GM23248 (cell line): ENCODE measurements at regions of chr12 and their contacts with region 1.

Region 1: GRCh38 chr12:105053116-105053572 is 31.1 kb downstream of the ALDH1L2 start:
- DNase-seq: peak; percentile 76
- H3K4me3 ChIP-seq: no peak overlapping the region
- H3K27ac ChIP-seq: no peak overlapping the region
- H3K4me1 ChIP-seq: no peaks in the 10 kb centered on the region
- H3K27me3 ChIP-seq: no peaks in the 10 kb centered on the region

Region 2: DNA sequence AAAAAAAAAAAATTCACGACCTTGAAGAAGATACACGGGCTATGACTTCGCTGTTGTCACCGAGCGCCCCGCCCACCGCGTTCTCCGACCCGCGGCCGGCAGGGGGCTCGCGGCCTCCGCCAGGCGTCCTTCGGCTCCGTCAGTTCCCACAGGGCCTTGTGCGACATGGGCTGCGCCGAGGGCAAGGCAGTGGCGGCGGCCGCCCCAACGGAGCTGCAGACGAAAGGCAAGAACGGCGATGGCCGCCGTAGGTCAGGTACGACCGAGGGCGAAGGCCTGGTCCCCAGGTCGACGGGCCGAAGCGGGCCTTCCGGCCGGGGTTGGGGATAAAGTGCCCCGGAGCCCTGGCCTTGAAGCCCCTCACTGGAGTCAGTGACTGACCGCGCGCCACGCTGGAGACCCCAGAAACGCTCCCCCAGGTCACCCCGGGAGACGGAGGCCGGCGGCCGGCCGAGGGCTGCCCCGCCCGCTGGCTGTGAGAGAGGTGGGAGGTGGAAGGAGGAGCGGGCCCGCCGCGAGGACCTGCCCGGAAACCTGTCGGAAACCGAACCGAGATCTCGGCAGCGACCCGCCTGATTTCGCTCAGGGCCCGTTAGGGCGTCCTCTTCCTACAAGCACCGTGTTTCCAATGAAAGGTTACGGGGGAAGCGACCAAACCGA is 837.4 kb before region 1 on chr12 and contains the start of gene TXNRD1:
- in situ Hi-C with region 1: loop called (anchors 25 kb)
- DNase-seq: peak; percentile 92
- H3K4me3 ChIP-seq: peak within 1 kb of the TSS; percentile 53
- H3K27ac ChIP-seq: no peak within 1 kb of the TSS
- H3K4me1 ChIP-seq: peaks cover 31% of the 10 kb centered on the region
- H3K27me3 ChIP-seq: no peaks in the 10 kb centered on the region
- total RNA-seq, gene TXNRD1: 464 and 477 TPM in 2 replicates

Region 3: GRCh38 chr12:104381731-104382480 is 671.2 kb before region 1 on chr12:
- in situ Hi-C with region 1: loop called (anchors 25 kb)
- DNase-seq: peak; percentile 83
- H3K4me3 ChIP-seq: peak overlapping the region; percentile 41; the same call in 1 of the 2 replicates
- H3K27ac ChIP-seq: no peak overlapping the region
- H3K4me1 ChIP-seq: peaks cover 4% of the 10 kb centered on the region
- H3K27me3 ChIP-seq: no peaks in the 10 kb centered on the region

Region 4: DNA sequence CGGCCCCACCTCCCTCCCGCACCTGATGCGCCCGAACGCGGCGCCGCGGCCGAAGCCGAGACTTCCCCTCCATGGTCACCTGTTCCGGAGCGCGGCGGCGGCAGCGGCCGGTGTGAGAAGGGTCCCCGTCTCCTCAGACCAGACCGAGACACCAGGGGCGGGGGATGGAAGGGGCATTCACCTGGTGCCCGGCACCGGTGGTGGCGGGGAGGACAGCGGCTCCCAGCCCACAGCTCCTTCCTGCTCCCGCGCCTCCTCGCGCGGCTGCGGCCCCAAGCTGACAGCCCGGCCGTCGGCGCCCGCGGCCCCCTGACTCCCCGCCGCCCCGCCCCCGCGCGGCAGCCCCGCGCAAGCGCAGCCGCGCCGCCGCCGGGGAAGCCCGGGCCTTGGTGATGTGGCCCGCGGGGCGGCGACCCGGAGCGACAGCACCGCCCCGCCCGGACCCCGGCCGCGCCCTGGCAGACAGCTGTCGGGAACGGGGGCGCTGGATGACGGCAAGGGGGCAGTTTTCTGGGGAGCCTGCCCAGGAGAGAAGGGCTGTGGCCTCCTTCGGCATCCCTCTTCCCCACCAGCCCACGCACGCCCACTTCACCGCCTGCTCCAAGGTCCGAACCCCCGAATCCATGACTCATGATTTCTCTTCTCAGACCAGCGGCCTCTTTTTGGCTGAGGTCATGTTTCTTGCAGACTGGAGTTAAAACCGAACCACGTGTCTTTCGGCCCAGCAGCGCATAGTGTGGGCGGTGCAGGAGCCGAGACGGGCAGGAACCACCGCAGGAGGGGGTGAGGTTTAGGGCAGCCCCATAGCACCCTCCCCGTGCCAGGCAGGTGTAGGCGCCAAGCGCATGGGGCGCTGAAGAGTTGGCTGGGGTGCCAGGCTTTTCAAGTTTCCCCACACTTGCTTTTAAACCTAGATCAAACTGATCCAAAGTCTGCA is 94.9 kb before region 1 on chr12 and contains the start of gene SLC41A2:
- in situ Hi-C with region 1: no loop called
- DNase-seq: peak; percentile 98
- H3K4me3 ChIP-seq: peak within 1 kb of the TSS; percentile 96
- H3K27ac ChIP-seq: peak within 1 kb of the TSS; percentile 85
- H3K4me1 ChIP-seq: peaks cover 23% of the 10 kb centered on the region
- H3K27me3 ChIP-seq: no peaks in the 10 kb centered on the region
- total RNA-seq, gene SLC41A2: 29.6 and 34.5 TPM in 2 replicates